Sciatic nerve (tissue), 2 donors: ENCODE measurements at regions of chr5 and their contacts with region 1.

Region 1: GRCh38 chr5:99032234-99033013 is 103.6 kb upstream of the CHD1 start:
- DNase-seq: peak; percentile 73
- ATAC-seq: peak; percentile 91

Region 2: DNA sequence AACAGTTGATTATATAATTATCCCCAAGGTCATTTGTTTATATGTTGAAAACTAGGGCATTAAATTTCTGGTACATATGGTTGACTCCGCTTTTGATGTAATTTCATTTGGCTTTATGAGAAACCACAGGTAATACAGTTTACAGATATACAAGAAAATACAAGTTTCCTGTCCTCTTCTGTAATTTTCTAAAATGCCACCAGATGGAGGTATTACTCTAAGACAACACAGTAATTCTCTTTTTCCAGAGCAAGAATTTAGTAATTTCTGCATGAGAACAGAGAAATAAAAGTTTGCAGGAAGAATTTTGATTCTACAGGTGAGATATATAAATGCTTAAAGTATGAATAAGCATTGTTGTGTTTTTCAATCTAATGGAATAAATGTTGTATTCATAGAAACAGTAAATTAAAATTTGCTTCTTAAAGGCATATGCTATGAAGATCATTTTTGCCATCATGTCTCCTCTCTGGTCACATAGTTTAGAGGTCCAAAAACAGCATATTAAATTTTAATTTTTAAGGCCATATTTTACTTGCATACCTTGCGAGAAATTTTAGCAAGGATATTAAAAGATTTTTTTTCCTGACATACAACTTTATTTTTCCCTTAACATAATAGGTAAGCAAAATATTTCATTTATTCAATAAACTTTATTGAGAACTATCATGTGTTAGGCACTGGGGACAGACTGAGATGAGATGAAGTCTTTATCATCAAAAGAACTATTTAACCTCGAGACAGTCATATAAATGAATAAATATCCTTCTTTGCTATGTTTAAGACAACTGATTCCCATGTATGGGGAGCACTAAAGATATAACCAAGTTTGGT is 126.3 kb before region 1 on chr5:
- intact Hi-C with region 1: loop called (anchors 10 kb)
- DNase-seq: no peak
- ATAC-seq: no peak